Pancreas (tissue), 10 donors: ENCODE measurements at regions of chr6 and their contacts with region 1.

Region 1: DNA sequence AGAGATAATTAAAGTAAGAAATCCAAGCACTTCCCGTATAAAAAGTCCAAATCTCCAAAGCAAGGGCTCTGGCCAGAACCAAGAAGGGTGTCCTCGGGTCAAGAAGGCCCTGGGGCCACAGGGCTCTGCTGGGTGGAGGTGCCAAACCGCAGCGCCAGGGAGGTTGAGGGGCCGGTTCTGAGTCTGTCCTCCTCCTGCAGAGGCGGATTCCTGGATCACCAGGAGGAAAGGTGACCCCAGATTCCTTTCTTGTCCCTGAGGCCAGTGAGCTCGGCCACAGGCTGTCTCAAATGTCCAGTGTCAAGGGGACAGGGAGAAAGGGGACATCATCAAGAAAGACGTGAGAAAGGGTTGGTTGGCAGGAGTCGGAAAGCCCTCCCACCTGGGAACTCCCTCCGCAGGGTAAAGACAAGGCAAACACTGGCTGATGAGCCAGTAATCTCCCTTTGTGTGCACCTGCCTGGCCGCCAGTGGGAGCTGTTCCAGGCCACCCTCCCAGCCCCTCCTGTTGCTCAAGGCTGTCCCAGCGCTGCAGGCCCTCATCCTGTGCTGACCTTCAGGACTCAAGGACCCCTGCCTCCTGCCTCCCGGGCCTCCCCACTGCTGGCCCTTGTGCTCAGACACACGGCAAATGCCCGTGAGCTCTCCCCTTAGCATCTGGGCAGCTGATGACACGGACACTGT is 7.5 kb downstream of the FRMD1 start:
- DNase-seq: no peak
- ATAC-seq: peak in 2 of 4 donors; percentile 25 to 90
- H3K4me3 ChIP-seq: no peak overlapping the region
- H3K27ac ChIP-seq: no peak overlapping the region
- H3K4me1 ChIP-seq: no peaks in the 10 kb centered on the region
- H3K27me3 ChIP-seq: no peaks in the 10 kb centered on the region
- CTCF ChIP-seq: no peak

Region 2: GRCh38 chr6:167298153-167298552 is 773.3 kb before region 1 on chr6:
- intact Hi-C with region 1: no loop called
- DNase-seq: no peak
- ATAC-seq: no peak
- H3K4me3 ChIP-seq: no peak overlapping the region
- H3K27ac ChIP-seq: no peak overlapping the region
- H3K4me1 ChIP-seq: no peaks in the 10 kb centered on the region
- H3K27me3 ChIP-seq: no peaks in the 10 kb centered on the region
- CTCF ChIP-seq: no peak

Region 3: GRCh38 chr6:168126566-168127383 is 55.3 kb after region 1 on chr6:
- intact Hi-C with region 1: loop called in 1 of 3 experiments (anchors 5 kb)
- DNase-seq: no peak
- ATAC-seq: no peak
- H3K4me3 ChIP-seq: no peak overlapping the region
- H3K27ac ChIP-seq: no peak overlapping the region
- H3K4me1 ChIP-seq: no peaks in the 10 kb centered on the region
- H3K27me3 ChIP-seq: no peaks in the 10 kb centered on the region
- CTCF ChIP-seq: no peak